ENCODE measurements at regions of chr12 and their contacts with region 1.

Region 1: DNA sequence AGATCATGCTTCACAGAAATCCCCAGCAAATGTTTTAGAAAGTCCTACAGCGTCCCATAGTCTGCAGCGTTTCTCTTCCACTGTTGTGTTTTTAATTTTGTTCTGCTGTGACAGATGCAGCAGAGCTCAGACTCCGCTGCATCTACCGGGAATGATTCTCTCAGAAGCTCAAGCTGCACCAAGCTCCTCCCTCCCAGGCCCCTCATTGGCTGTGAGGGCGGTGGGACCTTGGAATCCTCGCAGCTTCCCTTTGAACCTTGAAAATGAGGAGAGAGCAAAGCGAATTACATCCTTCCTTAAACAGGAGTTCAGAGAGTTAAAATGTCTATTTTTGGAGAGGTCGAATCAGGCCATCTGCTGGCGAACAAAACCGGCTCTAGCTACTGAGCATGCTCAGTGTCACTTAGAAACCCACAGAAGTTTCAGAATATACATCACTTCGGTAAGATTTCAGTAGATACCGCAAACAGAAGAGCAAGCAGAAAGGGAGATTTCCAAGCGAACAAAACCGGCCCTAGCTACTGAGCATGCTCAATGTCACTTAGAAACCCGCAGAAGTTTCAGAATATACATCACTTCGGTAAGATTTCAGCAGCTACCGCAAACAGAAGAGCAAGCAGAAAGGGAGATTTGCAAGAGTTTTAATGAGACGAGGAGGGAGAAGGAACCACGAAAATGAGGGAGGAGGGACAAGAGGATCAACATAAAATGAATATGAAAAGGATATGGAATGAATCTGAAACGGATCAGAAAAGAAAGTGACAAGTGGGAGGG is at the start of gene ABCD2:
- DNase-seq: peak in 9 of 10 donors; percentile 54 to 86 (median 79)
- H3K4me3 ChIP-seq: peak within 1 kb of the TSS; percentile 43 to 83 (median 68)
- H3K27ac ChIP-seq: peak within 1 kb of the TSS; percentile 29 to 93 (median 79)
- H3K27me3 ChIP-seq: no peaks in the 10 kb centered on the region
- CTCF ChIP-seq: peak in 44 of 56 donors; percentile 6 to 66 (median 35)
- total RNA-seq, gene ABCD2: 3.5 to 19.6 (median 11.8) TPM

Region 2: GRCh38 chr12:39240587-39240986 is 379.3 kb before region 1 on chr12:
- intact Hi-C with region 1: no loop called
- DNase-seq: no peak
- H3K4me3 ChIP-seq: no peak overlapping the region
- H3K27ac ChIP-seq: no peak overlapping the region
- H3K27me3 ChIP-seq: no peaks in the 10 kb centered on the region
- CTCF ChIP-seq: no peak

Region 3: DNA sequence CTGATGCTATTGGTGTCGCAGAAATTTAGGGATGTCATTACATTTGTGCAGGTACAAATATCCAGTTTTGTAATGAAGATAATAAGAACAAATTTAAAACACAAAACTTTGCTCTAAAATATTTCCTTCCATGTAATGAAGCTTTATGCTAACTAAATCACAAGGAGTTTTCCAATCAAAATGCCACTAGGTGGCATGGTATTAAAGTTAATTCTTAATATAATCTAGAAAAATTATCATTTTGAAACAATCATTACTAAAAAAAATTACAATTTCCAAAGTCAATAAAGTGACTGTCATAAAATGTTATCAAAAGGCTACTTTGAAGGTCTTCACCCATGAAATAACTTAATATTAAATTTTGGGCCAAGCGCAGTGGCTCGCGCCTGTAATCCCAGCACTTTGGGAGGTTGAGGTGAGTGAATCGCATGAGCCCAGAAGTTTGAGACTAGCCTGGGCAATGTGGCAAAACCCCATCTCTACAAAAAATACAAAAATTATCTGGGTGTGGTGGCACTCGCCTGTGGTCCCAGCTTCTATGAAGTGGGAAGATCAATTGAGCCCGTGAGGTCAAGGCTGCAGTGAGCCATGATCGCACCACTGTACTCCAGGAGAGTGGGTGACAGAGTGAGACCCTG is 254.4 kb before region 1 on chr12:
- intact Hi-C with region 1: loop called in 1 of 2 experiments (anchors 5 kb)
- DNase-seq: no peak
- H3K4me3 ChIP-seq: no peak overlapping the region
- H3K27ac ChIP-seq: no peak overlapping the region
- H3K27me3 ChIP-seq: no peaks in the 10 kb centered on the region
- CTCF ChIP-seq: peak in 51 of 56 donors; percentile 25 to 74 (median 51)